Esophagus muscularis mucosa (tissue), 4 donors: ENCODE measurements at regions of chr5 and their contacts with region 1.

Region 1: GRCh38 chr5:115544436-115545350 is at the start of gene FEM1C:
- DNase-seq: peak; percentile 99
- H3K4me3 ChIP-seq: peak within 1 kb of the TSS; percentile 88 to 98 (median 95)
- H3K27ac ChIP-seq: peak within 1 kb of the TSS; percentile 98 to 99 (median 99)
- H3K4me1 ChIP-seq: peaks cover 6 to 26% (median 20%) of the 10 kb centered on the region in 4 donors
- H3K27me3 ChIP-seq: no peaks in the 10 kb centered on the region
- CTCF ChIP-seq: no peak
- EP300 ChIP-seq: no peak
- POLR2A ChIP-seq: peak; percentile 97
- total RNA-seq, gene FEM1C: 41.3 to 71.0 (median 51.5) TPM

Region 2: GRCh38 chr5:115419846-115420585 is 124.7 kb before region 1 on chr5:
- intact Hi-C with region 1: loop called (anchors 5 kb)
- DNase-seq: no peak
- H3K4me3 ChIP-seq: no peak overlapping the region
- H3K27ac ChIP-seq: peak overlapping the region in 2 of 4 donors; percentile 28 to 36
- H3K4me1 ChIP-seq: peaks cover 38 to 60% (median 48%) of the 10 kb centered on the region in 4 donors
- H3K27me3 ChIP-seq: no peaks in the 10 kb centered on the region
- CTCF ChIP-seq: no peak
- EP300 ChIP-seq: peak; percentile 36
- POLR2A ChIP-seq: no peak